ENCODE measurements at regions of chr10 and their contacts with region 1.

Region 1: DNA sequence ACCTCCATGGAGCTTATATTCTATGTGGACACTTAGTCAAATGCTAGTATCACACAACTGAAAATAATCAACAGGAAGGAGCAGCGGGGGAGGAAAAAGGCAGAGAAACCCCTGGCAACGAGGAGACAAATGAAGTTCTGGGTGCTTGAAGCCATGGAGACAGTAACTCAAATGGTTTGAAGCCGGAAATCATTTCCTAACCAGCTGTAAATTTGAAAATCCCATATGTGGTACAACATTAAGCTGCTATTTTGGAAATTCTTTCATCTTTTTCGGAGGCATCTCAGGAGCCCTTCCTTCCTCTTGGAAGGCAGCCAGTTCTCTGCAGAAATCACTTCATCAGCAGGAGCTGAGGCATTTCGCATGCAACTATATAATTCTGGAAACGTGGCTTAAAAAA is 91.4 kb downstream of the PPP1R3C start:
- DNase-seq: no peak
- ATAC-seq: no peak
- H3K4me3 ChIP-seq: no peak overlapping the region
- H3K27ac ChIP-seq: no peak overlapping the region
- H3K4me1 ChIP-seq: peaks cover 7% of the 10 kb centered on the region
- H3K27me3 ChIP-seq: no peaks in the 10 kb centered on the region
- CTCF ChIP-seq: no peak
- POLR2A ChIP-seq: no peak

Region 2: GRCh38 chr10:91493313-91493712 is 48.2 kb before region 1 on chr10:
- intact Hi-C with region 1: loop called (anchors 5 kb)
- DNase-seq: no peak
- ATAC-seq: no peak
- H3K4me3 ChIP-seq: no peak overlapping the region
- H3K27ac ChIP-seq: no peak overlapping the region
- H3K4me1 ChIP-seq: no peaks in the 10 kb centered on the region
- H3K27me3 ChIP-seq: no peaks in the 10 kb centered on the region
- CTCF ChIP-seq: peak in 6 of 7 experiments; percentile 20 to 73 (median 62)
- POLR2A ChIP-seq: no peak

Region 3: DNA sequence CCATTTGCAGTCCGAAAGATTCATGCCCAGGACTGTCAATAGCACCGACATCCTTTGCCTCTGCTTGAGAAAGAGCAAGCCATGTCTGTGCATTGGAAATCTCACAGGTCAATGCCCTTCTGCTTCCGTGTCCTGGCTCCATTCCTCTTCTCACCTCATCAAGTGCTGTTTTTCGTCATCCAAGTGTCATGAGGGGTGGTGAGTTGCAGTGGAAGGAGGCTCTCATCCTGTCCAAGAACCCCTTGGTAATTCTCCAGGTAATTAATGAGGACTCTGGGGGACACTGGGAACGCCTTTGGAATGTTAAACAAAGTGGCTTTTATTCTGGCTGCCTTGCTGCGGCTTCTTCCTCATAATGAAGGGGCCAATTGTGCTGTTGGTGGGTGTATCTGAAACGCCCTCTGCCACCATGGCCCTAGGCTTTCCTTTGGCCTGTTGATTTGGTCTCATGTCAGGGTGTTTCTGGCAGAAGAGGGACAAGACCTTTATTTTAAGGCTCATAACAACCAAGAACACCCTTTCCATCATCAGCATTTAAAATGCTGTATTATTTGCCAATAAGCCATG is 33.6 kb after region 1 on chr10:
- intact Hi-C with region 1: no loop called
- DNase-seq: no peak
- ATAC-seq: no peak
- H3K4me3 ChIP-seq: no peak overlapping the region
- H3K27ac ChIP-seq: no peak overlapping the region
- H3K4me1 ChIP-seq: peaks cover 14% of the 10 kb centered on the region
- H3K27me3 ChIP-seq: no peaks in the 10 kb centered on the region
- CTCF ChIP-seq: no peak
- POLR2A ChIP-seq: no peak

Measured in body of pancreas (tissue), 4 donors.